ENCODE measurements at regions of chr5 and their contacts with region 1.

Region 1: GRCh38 chr5:86997516-86997915 is 270.2 kb upstream of the RASA1 start:
- DNase-seq: no peak
- H3K4me3 ChIP-seq: no peak overlapping the region
- H3K27ac ChIP-seq: no peak overlapping the region
- H3K27me3 ChIP-seq: no peaks in the 10 kb centered on the region
- CTCF ChIP-seq: no peak

Region 2: DNA sequence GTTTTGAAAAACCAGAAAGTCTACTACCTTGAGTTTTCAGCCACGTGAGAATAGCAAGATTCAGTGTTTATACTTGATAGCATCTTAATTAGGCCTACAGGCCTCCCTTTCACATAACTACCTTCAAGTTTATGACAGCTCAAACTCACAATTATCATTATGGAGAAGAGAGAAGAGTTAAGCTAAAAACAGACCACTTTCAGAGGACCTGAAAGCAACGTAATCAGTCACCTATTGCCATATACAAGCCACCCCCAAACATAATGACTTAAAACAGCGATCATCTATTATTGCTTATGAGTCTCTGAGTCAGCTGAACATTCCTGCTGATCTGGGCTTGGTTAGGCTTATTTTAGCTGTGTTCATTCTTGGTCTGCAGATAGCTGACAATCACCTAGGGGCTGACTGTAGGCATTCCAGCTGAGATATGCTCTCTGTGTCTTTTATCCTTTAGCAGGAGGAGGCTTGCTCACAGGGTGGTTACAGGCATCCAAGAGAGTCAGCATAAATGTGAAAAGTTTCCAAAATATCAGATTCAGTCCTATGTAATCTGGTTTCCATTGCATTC is 248.9 kb before region 1 on chr5:
- intact Hi-C with region 1: loop called in 1 of 2 experiments (anchors 10 kb)
- DNase-seq: no peak
- H3K4me3 ChIP-seq: no peak overlapping the region
- H3K27ac ChIP-seq: no peak overlapping the region
- H3K27me3 ChIP-seq: no peaks in the 10 kb centered on the region
- CTCF ChIP-seq: no peak

Region 3: GRCh38 chr5:87081511-87082372 is 84.2 kb after region 1 on chr5:
- intact Hi-C with region 1: no loop called
- DNase-seq: peak in 1 of 10 donors; percentile 18
- H3K4me3 ChIP-seq: no peak overlapping the region
- H3K27ac ChIP-seq: no peak overlapping the region
- H3K27me3 ChIP-seq: no peaks in the 10 kb centered on the region
- CTCF ChIP-seq: no peak

Measured in dorsolateral prefrontal cortex (tissue), 120 donors.